ENCODE measurements at regions of chr11 and their contacts with region 1.

Region 1: DNA sequence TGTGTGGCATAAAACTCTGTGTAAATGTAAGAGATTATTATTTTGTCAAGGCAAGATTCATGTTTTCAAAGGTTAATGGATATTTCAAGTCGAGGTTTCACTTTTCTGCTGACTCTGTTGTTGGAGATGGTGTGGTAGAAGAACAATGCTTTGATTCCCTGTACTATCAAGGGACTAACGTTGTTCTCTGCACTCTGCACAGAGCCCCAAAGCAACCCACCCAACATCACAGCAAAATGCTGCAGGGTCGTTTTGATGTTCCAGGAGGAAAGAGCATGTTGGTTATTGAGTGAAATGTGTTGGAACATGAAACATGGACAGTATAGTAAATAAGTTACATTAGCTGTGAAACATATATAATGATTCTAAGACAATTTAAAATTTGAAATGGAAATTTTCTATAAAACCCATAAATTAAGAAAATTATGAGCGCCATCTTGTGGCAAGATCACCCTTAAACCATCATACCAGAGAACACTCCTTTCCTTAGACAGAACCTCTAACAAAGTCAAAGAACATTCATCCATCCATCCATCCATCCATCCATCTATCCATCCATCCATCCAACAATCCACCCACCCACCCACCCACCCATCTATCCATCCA is 164.4 kb upstream of the ZBED5 start:
- DNase-seq: no peak
- ATAC-seq: no peak

Region 2: DNA sequence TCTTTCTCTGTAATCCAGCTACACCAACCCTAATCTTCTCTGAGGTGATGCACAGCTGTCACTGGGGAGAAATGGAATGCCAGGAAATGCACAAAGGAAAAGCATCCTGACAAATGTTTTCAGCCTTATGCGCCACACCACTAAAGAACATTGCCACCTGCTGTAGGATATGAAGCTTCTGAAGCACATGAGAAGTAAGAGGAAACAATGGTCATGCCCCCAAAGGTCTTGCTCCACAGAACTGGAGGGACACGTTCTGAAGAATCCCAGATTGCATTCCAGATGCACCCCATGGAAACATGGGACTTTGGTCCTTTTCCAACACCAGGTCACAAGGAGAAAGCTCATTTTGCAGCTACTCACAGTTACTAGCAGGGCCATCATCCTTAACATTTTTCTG is 115.7 kb before region 1 on chr11:
- intact Hi-C with region 1: no loop called
- DNase-seq: no peak
- ATAC-seq: no peak

Region 3: DNA sequence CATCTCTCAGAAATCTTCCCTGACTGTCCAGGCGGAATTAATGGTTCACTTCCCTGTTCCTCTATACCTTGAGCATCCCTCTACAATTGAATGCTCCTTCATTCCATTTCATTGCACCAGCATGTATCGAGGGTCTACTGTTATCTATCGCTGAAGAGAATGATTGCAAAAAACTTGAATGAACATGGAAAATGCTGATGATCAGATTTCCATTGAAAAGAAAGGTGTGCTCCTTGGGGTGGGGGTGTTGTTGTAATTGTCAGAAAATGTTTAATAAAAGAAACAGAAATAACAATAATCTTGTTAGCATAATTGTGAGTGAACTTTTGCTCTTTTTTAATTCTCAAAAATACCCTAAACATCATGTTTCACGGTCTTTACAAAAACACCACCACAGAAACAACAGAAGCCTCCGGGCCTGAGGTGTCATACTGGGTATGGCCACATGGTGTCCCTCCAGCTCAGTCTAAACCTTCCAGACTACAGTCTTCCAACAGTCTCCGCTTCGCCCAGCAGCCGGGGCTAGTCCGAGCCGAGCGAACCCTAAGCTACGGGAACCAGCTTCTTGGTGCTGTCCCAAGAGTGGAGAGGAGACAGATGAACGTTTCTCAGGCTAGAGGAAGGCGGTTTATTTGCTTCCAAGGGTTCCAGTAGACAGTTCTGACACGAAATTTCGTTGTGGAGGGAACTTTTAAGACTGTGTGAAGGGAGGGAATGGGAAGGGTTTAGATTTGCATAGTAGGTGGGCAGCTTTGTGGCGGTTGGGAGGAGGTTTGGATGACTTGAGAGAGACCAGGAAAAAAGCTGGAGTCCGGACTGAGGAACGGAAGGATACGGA is 88.6 kb before region 1 on chr11:
- intact Hi-C with region 1: loop called (anchors 5 kb)
- DNase-seq: peak; percentile 95
- ATAC-seq: peak; percentile 94